A549 (cell line): ENCODE measurements at regions of chr9 and their contacts with region 1.

Region 1: DNA sequence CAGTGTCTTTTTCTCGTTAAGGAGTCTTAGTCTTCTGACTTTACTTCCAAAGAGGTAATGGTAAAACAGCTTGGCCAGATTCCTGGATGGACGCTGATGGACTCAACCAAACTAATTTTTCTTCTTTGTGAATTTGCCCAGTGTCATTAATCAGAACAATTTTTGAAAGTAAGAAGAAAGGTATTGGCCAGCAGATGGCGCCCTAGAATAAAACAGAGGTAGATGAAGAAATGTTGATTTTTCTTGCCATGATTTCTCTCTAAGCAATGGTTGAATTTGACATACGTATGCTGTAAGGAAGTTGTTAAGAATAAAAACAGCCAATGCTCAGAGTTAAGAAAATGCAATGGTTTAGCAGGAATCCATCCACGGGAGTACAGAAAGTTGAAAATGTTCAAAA is 500.0 kb downstream of the DIRAS2 start:
- DNase-seq: peak in 1 of 2 experiments; percentile 48
- ATAC-seq: no peak
- H3K4me3 ChIP-seq: no peak overlapping the region
- H3K27ac ChIP-seq: no peak overlapping the region
- H3K4me1 ChIP-seq: no peaks in the 10 kb centered on the region
- CTCF ChIP-seq: peak; percentile 55; the same call in 2 of the 3 replicates
- EP300 ChIP-seq: no peak
- POLR2A ChIP-seq: no peak
- RAD21 ChIP-seq: peak; percentile 54 to 55; a peak in 4 of 5 replicates

Region 2: GRCh38 chr9:90156315-90156714 is 13.7 kb after region 1 on chr9:
- CTCF ChIA-PET with region 1: interaction called, 19 read pairs
- POLR2A ChIA-PET with region 1: no interaction called
- DNase-seq: no peak
- ATAC-seq: no peak
- H3K4me3 ChIP-seq: no peak overlapping the region
- H3K27ac ChIP-seq: no peak overlapping the region
- H3K4me1 ChIP-seq: no peaks in the 10 kb centered on the region
- CTCF ChIP-seq: no peak
- EP300 ChIP-seq: no peak
- POLR2A ChIP-seq: no peak
- RAD21 ChIP-seq: no peak

Region 3: GRCh38 chr9:90189306-90189705 is 46.7 kb after region 1 on chr9:
- CTCF ChIA-PET with region 1: no interaction called
- POLR2A ChIA-PET with region 1: no interaction called
- DNase-seq: no peak
- ATAC-seq: no peak
- H3K4me3 ChIP-seq: no peak overlapping the region
- H3K27ac ChIP-seq: no peak overlapping the region
- H3K4me1 ChIP-seq: no peaks in the 10 kb centered on the region
- CTCF ChIP-seq: no peak
- EP300 ChIP-seq: no peak
- POLR2A ChIP-seq: no peak
- RAD21 ChIP-seq: no peak